ENCODE measurements at regions of chr5 and their contacts with region 1.

Region 1: DNA sequence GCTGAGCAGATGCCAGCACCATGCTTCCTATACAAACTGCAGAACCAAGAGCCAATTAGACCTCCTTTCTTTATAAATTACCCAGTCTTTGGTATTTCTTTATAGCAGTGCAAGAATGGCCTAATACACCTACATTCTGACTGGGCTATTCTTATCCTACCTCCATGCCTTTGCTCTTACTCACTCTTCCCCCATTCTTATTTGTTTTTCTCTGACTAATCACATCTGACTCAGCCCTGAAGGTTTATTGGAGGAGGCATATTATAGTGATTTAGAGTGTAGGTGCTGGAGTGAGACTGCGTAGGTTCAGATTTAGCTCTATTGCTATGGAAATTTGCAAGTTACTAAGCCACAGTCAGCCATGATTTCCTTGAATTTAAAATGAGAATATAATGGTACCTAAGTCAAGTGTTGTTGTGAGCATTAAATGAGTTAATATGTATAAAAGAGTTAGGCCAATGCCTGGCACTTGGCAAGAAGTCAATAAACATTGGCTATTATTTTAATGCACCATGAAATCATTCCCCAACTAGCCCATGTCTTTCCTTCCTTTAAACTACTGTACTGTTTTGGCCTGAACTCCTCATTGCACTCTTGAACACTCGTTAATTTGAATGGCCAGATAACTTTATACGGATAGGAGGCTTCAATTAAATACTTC is 531.2 kb upstream of the ZNF608 start:
- DNase-seq: peak; percentile 93
- H3K4me3 ChIP-seq: no peak overlapping the region
- H3K27ac ChIP-seq: peak overlapping the region; percentile 85
- H3K4me1 ChIP-seq: peaks cover 46% of the 10 kb centered on the region
- H3K27me3 ChIP-seq: no peaks in the 10 kb centered on the region
- CTCF ChIP-seq: no peak
- POLR2A ChIP-seq: no peak

Region 2: DNA sequence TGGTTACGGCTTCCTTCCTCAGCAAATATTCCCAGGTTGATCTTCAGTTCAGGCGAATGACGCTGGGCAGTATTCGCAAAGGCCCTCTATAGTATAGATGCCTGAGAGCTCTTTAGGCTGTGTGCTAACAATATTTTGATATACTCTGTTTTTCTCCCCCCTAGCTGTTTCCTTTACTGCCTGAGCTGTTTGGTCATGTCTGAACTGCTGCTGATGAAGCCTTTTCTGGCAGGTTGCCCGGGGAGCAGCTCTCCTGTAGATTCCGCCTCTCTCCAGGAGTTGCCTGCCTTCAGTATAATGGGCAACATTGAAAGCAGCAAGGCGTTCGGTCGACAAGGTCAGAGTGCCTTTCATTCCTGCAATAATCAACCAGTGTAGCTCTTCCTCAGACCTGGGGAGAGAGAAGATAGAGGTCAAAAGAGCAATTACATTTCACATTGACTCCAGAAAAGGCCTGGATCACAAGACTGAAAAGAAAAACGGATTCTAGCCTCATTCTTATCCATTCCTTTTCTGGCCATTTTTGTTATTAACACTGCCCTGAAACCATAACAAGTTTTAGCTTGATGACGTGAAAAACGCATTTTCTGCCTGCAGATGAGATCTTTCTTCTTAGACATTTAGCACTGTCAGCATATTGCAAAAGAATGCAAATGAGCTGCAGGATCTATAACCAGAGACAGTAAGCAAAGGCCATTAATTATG is 471.1 kb before region 1 on chr5:
- CTCF ChIA-PET with region 1: no interaction called
- POLR2A ChIA-PET with region 1: no interaction called
- dilution Hi-C with region 1: no loop called
- intact Hi-C with region 1: loop called (anchors 1 kb)
- DNase-seq: peak; percentile 94
- H3K4me3 ChIP-seq: no peak overlapping the region
- H3K27ac ChIP-seq: no peak overlapping the region
- H3K4me1 ChIP-seq: peaks cover 5% of the 10 kb centered on the region
- H3K27me3 ChIP-seq: no peaks in the 10 kb centered on the region
- CTCF ChIP-seq: no peak
- POLR2A ChIP-seq: no peak

Region 3: DNA sequence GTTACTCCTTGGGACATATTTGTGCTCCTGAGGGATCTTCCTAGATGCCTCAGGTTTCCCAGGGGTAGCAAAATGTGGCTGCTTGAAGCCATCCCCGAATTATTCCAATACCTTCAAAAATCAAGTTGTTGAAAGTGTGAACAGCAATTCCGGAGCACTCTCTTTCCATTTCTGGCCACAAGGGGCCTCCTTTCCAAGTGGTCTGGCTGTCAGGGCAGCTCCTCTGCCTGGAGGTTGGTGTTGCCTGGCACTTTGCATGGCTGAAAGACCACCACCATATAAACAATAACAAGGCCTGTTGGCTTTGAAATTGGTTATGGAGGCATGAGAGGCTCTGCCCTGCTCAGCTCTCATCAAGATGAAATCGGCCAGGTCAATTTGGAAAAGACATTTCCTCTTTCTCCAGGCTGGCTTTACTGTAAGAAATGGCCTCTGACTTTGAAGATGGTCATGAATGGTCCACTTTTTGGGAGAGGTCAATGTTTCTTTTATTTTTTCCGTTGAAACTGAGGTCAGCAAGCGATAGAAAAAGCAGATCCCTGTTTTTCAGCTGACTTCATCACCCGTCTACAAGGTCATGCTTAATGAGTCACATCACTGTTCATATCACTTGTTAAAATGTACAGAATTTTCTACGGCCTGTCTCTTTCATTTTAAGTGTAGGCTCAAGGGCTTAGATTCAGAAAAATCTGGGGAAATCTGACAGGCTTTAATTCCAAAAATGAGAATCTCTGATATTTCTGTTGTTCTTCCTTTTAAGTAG is 50.1 kb before region 1 on chr5:
- CTCF ChIA-PET with region 1: interaction called, 19 read pairs
- POLR2A ChIA-PET with region 1: no interaction called
- dilution Hi-C with region 1: no loop called
- intact Hi-C with region 1: no loop called
- DNase-seq: peak; percentile 33
- H3K4me3 ChIP-seq: no peak overlapping the region
- H3K27ac ChIP-seq: no peak overlapping the region
- H3K4me1 ChIP-seq: no peaks in the 10 kb centered on the region
- H3K27me3 ChIP-seq: no peaks in the 10 kb centered on the region
- CTCF ChIP-seq: peak; percentile 48 to 62
- POLR2A ChIP-seq: no peak

Region 4: DNA sequence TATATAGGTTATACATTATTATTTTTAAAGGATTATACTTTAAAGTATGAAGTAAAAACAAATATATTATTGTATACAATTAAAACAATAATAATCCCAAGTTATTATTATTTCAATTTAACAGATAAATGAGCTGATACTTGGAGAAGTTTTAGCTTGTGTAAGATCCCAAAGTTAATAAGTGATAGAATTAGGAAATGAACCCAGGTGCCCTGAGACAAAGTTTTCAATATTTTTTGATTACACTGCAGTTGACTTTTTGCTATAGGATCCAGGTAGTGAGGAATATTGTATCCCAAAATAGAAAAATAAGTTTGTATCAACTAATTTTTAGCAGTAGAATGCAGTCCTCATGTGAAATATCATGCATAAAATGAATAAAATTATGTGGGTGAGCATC is 12.0 kb after region 1 on chr5:
- CTCF ChIA-PET with region 1: interaction called, 10 read pairs
- POLR2A ChIA-PET with region 1: no interaction called
- dilution Hi-C with region 1: no loop called
- intact Hi-C with region 1: no loop called
- DNase-seq: no peak
- H3K4me3 ChIP-seq: no peak overlapping the region
- H3K27ac ChIP-seq: no peak overlapping the region
- H3K4me1 ChIP-seq: no peaks in the 10 kb centered on the region
- H3K27me3 ChIP-seq: no peaks in the 10 kb centered on the region
- CTCF ChIP-seq: no peak
- POLR2A ChIP-seq: no peak

Region 5: DNA sequence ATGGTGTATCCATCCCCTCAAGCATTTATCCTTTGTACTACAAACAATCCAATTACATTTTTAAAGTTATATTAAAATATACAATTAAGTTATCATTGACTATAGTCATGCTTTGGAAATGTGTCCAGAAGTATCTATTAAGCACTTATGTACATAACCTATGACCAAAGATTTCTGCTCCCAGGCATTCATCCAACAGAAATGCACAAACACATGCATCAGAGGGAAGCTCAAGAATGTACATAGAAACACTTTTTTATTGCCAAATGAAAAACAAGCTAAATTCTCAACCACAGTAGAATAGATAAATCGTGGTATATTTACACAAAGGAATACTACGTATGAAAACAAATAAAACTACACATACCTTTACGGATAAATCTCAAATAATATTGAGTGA is 169.4 kb after region 1 on chr5:
- CTCF ChIA-PET with region 1: no interaction called
- POLR2A ChIA-PET with region 1: no interaction called
- dilution Hi-C with region 1: no loop called
- intact Hi-C with region 1: no loop called
- DNase-seq: peak; percentile 21
- H3K4me3 ChIP-seq: no peak overlapping the region
- H3K27ac ChIP-seq: no peak overlapping the region
- H3K4me1 ChIP-seq: no peaks in the 10 kb centered on the region
- H3K27me3 ChIP-seq: no peaks in the 10 kb centered on the region
- CTCF ChIP-seq: no peak
- POLR2A ChIP-seq: no peak

Region 6: DNA sequence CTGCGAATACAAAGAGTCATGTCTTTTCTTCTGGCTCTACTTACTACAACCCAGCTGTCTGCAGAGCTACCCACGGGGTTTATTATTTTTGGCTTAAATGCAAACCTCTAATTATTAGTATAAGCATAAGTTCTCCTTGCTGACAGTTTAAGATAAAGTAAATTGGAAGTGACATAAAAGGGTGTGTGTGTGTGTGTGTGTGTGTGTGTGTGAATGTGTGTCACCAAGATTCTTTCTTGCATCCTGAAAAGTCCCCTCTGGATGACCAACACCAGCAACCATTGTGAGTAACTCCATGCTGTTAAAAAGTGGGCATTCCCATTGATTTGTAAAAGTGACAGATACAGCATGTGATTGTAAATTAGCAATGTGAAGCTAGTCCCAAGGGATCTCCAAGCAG is 272.6 kb after region 1 on chr5:
- CTCF ChIA-PET with region 1: no interaction called
- POLR2A ChIA-PET with region 1: no interaction called
- dilution Hi-C with region 1: no loop called
- intact Hi-C with region 1: loop called (anchors 5 kb)
- DNase-seq: peak; percentile 97
- H3K4me3 ChIP-seq: no peak overlapping the region
- H3K27ac ChIP-seq: peak overlapping the region; percentile 69
- H3K4me1 ChIP-seq: peaks cover 30% of the 10 kb centered on the region
- H3K27me3 ChIP-seq: no peaks in the 10 kb centered on the region
- CTCF ChIP-seq: no peak
- POLR2A ChIP-seq: peak; percentile 66